HepG2 (cell line): ENCODE measurements at regions of chr16 and their contacts with region 1.

Region 1: GRCh38 chr16:19601083-19601976 is 45.8 kb downstream of the VPS35L start:
- DNase-seq: peak; percentile 47
- ATAC-seq: peak; percentile 48
- H3K4me3 ChIP-seq: no peak overlapping the region
- H3K27ac ChIP-seq: no peak overlapping the region
- H3K4me1 ChIP-seq: peaks cover 9% of the 10 kb centered on the region
- H3K27me3 ChIP-seq: no peaks in the 10 kb centered on the region
- CTCF ChIP-seq: peak; percentile 89
- EP300 ChIP-seq: no peak
- POLR2A ChIP-seq: no peak
- RAD21 ChIP-seq: peak; percentile 91

Region 2: GRCh38 chr16:19555162-19555937 is 46.0 kb before region 1 on chr16 and contains the start of gene VPS35L:
- CTCF ChIA-PET with region 1: interaction called, 5 read pairs
- POLR2A ChIA-PET with region 1: no interaction called
- in situ Hi-C with region 1: no loop called
- intact Hi-C with region 1: loop called (anchors 1 kb)
- DNase-seq: peak; percentile 92
- ATAC-seq: peak; percentile 99
- H3K4me3 ChIP-seq: peak within 1 kb of the TSS; percentile 38 to 69 (median 57)
- H3K27ac ChIP-seq: peak within 1 kb of the TSS; percentile 48
- H3K4me1 ChIP-seq: peaks cover 19% of the 10 kb centered on the region
- H3K27me3 ChIP-seq: no peaks in the 10 kb centered on the region
- CTCF ChIP-seq: peak; percentile 90
- EP300 ChIP-seq: no peak
- POLR2A ChIP-seq: peak; percentile 48 to 79; a peak in 3 of 4 replicates
- RAD21 ChIP-seq: peak; percentile 48; the same call in 1 of the 2 replicates
- total RNA-seq, gene VPS35L: 0.97 and 1.4 TPM in 2 replicates

Region 3: GRCh38 chr16:19700319-19700781 is 99.0 kb after region 1 on chr16:
- CTCF ChIA-PET with region 1: no interaction called
- POLR2A ChIA-PET with region 1: no interaction called
- in situ Hi-C with region 1: no loop called
- intact Hi-C with region 1: loop called (anchors 1 kb)
- DNase-seq: peak; percentile 79
- ATAC-seq: peak; percentile 92
- H3K4me3 ChIP-seq: no peak overlapping the region
- H3K27ac ChIP-seq: no peak overlapping the region
- H3K4me1 ChIP-seq: peaks cover 20% of the 10 kb centered on the region
- H3K27me3 ChIP-seq: no peaks in the 10 kb centered on the region
- CTCF ChIP-seq: no peak
- EP300 ChIP-seq: peak in 1 of 2 experiments; percentile 50; a peak in 2 of 4 replicates
- POLR2A ChIP-seq: no peak
- RAD21 ChIP-seq: no peak